ENCODE measurements at regions of chr18 and their contacts with region 1.

Region 1: GRCh38 chr18:22930089-22930713 is 2.9 kb upstream of the RBBP8 start:
- DNase-seq: no peak
- H3K4me3 ChIP-seq: no peak overlapping the region
- CTCF ChIP-seq: peak; percentile 74

Region 2: GRCh38 chr18:22658318-22658717 is 271.9 kb before region 1 on chr18:
- CTCF ChIA-PET with region 1: no interaction called
- POLR2A ChIA-PET with region 1: no interaction called
- DNase-seq: no peak
- H3K4me3 ChIP-seq: no peak overlapping the region
- CTCF ChIP-seq: no peak

Region 3: DNA sequence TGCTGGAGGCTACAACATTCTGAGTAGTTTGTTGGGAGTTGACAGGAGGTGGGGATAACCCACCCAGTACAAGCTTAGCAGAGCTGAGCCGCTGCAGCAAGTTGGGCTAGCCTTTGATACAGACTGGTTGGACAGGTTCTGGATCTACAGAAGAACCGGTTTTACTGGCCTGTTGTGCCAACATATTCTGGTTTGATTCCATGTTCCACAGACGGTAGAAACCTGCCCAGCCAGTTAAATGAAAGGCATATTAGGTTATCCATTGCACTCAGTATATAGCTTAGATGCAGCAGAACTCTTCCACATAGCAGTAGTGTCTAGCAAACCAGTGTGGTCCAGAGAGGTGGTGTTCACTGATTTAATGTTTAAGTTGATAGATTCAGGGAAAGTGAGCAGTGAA is 16.3 kb before region 1 on chr18:
- CTCF ChIA-PET with region 1: interaction called, 38 read pairs
- POLR2A ChIA-PET with region 1: no interaction called
- DNase-seq: no peak
- H3K4me3 ChIP-seq: no peak overlapping the region
- CTCF ChIP-seq: no peak

Region 4: DNA sequence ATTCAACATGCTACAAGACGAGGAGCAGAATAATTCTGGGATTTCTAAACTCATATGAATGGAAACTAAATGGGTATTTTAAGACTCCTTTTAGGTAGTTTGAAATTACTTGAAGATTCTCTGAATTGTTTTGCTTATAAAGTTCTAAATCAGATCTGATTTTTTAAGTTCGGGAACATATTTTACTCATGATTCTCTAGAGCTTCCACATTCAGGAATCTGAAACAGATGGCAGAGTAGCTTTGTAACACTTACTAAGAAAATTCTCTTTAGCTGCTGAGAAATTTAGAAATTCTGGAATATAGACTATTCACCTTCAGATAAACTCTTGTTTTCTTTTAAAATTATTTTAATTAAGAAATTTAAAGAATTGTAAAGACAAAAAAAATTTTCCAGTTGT is 16.6 kb after region 1 on chr18:
- CTCF ChIA-PET with region 1: interaction called, 12 read pairs
- POLR2A ChIA-PET with region 1: interaction called, 3 read pairs
- DNase-seq: peak; percentile 41
- H3K4me3 ChIP-seq: no peak overlapping the region
- CTCF ChIP-seq: no peak

Region 5: GRCh38 chr18:22983175-22983574 is 53.0 kb after region 1 on chr18:
- CTCF ChIA-PET with region 1: interaction called, 44 read pairs
- POLR2A ChIA-PET with region 1: interaction called, 3 read pairs
- DNase-seq: no peak
- H3K4me3 ChIP-seq: no peak overlapping the region
- CTCF ChIP-seq: peak; percentile 25

Region 6: GRCh38 chr18:23143016-23143814 is 213.0 kb after region 1 on chr18:
- CTCF ChIA-PET with region 1: no interaction called
- POLR2A ChIA-PET with region 1: no interaction called
- DNase-seq: no peak
- H3K4me3 ChIP-seq: no peak overlapping the region
- CTCF ChIP-seq: no peak

Region 7: DNA sequence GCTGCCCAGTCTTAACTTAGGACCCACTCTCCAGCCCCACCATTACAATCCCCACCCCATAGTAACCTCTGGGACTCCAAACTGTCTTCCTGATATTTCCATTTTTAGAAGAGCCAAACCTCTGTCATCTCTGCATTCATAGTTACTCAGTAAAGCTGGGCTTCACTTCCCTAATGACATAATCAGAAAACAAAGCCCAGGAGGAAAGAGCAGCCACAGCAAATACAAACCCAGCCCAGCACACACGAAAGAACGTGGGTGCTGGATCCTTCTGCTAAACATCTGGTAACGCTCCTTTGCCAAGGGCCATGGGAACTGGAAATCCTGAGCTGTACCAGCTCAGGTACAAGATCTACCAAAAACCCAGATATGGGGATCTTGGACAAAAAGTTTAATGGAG is 486.1 kb after region 1 on chr18:
- CTCF ChIA-PET with region 1: interaction called, 15 read pairs
- POLR2A ChIA-PET with region 1: no interaction called
- DNase-seq: no peak
- H3K4me3 ChIP-seq: no peak overlapping the region
- CTCF ChIP-seq: no peak